A673 (cell line): ENCODE measurements at regions of chr7 and their contacts with region 1.

Region 1: GRCh38 chr7:28862595-28863272 is 95.4 kb downstream of the TRIL start:
- DNase-seq: no peak
- H3K4me3 ChIP-seq: no peak overlapping the region
- H3K27ac ChIP-seq: no peak overlapping the region
- H3K4me1 ChIP-seq: no peaks in the 10 kb centered on the region
- H3K27me3 ChIP-seq: no peaks in the 10 kb centered on the region
- CTCF ChIP-seq: no peak

Region 2: GRCh38 chr7:28823582-28823981 is 39.2 kb before region 1 on chr7:
- CTCF ChIA-PET with region 1: no interaction called
- POLR2A ChIA-PET with region 1: no interaction called
- intact Hi-C with region 1: no loop called
- DNase-seq: no peak
- H3K4me3 ChIP-seq: no peak overlapping the region
- H3K27ac ChIP-seq: no peak overlapping the region
- H3K4me1 ChIP-seq: no peaks in the 10 kb centered on the region
- H3K27me3 ChIP-seq: no peaks in the 10 kb centered on the region
- CTCF ChIP-seq: no peak

Region 3: DNA sequence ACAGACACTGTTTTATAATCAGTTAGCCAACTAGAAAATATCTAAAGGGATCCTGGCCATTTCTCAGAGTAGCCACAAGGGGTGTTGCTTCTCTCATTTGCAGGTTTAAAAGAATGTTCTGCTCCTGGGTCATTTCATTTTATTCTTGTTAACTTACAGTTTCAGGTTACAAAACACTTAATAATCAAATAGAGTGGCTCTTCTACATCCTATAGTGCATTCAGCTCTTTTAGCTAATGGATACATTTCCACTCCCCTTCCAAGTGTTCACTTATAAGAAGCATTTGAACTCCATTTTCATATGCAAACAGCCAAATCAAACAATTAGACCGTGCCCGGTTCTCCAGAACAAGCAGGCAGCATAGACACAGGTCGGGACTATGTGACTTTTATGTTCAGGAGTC is 22.1 kb before region 1 on chr7:
- CTCF ChIA-PET with region 1: interaction called, 10 read pairs
- POLR2A ChIA-PET with region 1: no interaction called
- intact Hi-C with region 1: no loop called
- DNase-seq: peak; percentile 10
- H3K4me3 ChIP-seq: no peak overlapping the region
- H3K27ac ChIP-seq: no peak overlapping the region
- H3K4me1 ChIP-seq: no peaks in the 10 kb centered on the region
- H3K27me3 ChIP-seq: peaks cover 8% of the 10 kb centered on the region
- CTCF ChIP-seq: peak; percentile 60